Activated CD4-positive, alpha-beta memory T cell treated with anti-CD3 and anti-CD28 coated beads for 36 hours (primary cell): ENCODE measurements at regions of chr10 and their contacts with region 1.

Region 1: GRCh38 chr10:28532383-28533175 is at the start of gene WAC:
- DNase-seq: peak; percentile 98
- H3K4me3 Mint-ChIP-seq: peak within 1 kb of the TSS; percentile 98
- H3K27ac Mint-ChIP-seq: peak within 1 kb of the TSS; percentile 100
- H3K4me1 Mint-ChIP-seq: peaks cover 45% of the 10 kb centered on the region
- H3K27me3 Mint-ChIP-seq: no peaks in the 10 kb centered on the region
- total RNA-seq, gene WAC: 92.9 to 93.1 TPM

Region 2: GRCh38 chr10:27457966-27458365 is 1074.6 kb before region 1 on chr10:
- CTCF ChIA-PET with region 1: no interaction called
- POLR2A ChIA-PET with region 1: no interaction called
- intact Hi-C with region 1: no loop called
- DNase-seq: no peak
- H3K4me3 Mint-ChIP-seq: no peak overlapping the region
- H3K27ac Mint-ChIP-seq: no peak overlapping the region
- H3K4me1 Mint-ChIP-seq: peaks cover 6% of the 10 kb centered on the region
- H3K27me3 Mint-ChIP-seq: no peaks in the 10 kb centered on the region

Region 3: GRCh38 chr10:27504007-27504807 is 1028.4 kb before region 1 on chr10 and contains the start of gene RAB18:
- CTCF ChIA-PET with region 1: no interaction called
- POLR2A ChIA-PET with region 1: no interaction called
- intact Hi-C with region 1: loop called (anchors 1 kb)
- DNase-seq: peak; percentile 99
- H3K4me3 Mint-ChIP-seq: peak within 1 kb of the TSS; percentile 100
- H3K27ac Mint-ChIP-seq: peak within 1 kb of the TSS; percentile 96
- H3K4me1 Mint-ChIP-seq: peaks cover 51% of the 10 kb centered on the region
- H3K27me3 Mint-ChIP-seq: no peaks in the 10 kb centered on the region
- total RNA-seq, gene RAB18: 51.7 to 54.0 TPM

Region 4: DNA sequence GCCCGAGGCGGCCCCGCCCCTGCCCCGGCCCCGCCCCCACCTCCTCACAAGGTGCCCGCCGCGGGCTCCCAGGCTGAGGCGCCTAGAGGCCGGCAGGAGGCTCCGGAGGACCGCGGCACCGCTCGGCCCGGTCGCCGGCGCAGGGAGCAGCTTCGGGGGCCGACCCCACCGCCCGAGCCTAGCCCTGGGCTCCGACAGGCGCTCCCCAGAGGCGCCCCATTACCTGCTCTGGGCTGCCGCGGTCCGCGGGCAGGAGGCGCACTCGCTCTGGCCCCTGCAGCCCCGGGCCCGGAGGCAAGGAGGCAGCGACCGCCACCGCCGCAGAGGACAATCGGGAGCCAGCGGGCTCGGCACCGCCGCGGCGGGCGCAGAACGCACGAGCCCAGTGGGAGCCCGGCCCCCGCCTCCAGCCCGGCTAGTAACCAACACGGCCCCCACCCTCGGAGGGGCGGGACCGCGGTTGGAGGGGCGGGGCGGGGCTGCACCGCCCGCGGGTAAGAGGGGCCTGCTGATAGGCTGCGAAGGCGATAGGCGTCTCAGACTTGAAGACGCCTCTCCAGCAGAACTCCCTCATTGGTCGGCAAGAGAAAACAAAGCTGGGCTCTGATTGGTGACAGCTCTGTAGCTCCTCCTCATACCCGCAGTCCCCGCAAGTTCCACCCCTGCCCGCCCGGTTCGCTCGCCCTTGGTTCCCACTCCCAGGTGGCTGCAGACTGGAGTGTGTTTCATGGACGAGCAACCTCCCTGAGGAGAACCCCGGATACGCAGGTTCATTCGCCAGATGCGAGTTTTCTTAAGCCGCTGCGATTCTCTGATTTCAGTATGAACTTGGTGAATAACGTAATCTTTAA is 229.7 kb before region 1 on chr10 and contains the start of gene MPP7:
- CTCF ChIA-PET with region 1: no interaction called
- POLR2A ChIA-PET with region 1: interaction called, 3 read pairs
- intact Hi-C with region 1: loop called (anchors 2 kb)
- DNase-seq: peak; percentile 97
- H3K4me3 Mint-ChIP-seq: peak within 1 kb of the TSS; percentile 90
- H3K27ac Mint-ChIP-seq: peak within 1 kb of the TSS; percentile 71
- H3K4me1 Mint-ChIP-seq: peaks cover 46% of the 10 kb centered on the region
- H3K27me3 Mint-ChIP-seq: no peaks in the 10 kb centered on the region
- total RNA-seq, gene MPP7: 11.6 to 12.8 TPM

Region 5: GRCh38 chr10:28545967-28546644 is 13.5 kb after region 1 on chr10:
- CTCF ChIA-PET with region 1: interaction called, 4 read pairs
- POLR2A ChIA-PET with region 1: interaction called, 10 read pairs
- intact Hi-C with region 1: loop called (anchors 2 kb)
- DNase-seq: no peak
- H3K4me3 Mint-ChIP-seq: no peak overlapping the region
- H3K27ac Mint-ChIP-seq: peak overlapping the region; percentile 4
- H3K4me1 Mint-ChIP-seq: peaks cover 70% of the 10 kb centered on the region
- H3K27me3 Mint-ChIP-seq: no peaks in the 10 kb centered on the region

Region 6: GRCh38 chr10:28592930-28593329 is 60.4 kb after region 1 on chr10:
- CTCF ChIA-PET with region 1: no interaction called
- POLR2A ChIA-PET with region 1: no interaction called
- intact Hi-C with region 1: loop called (anchors 5 kb)
- DNase-seq: no peak
- H3K4me3 Mint-ChIP-seq: peak overlapping the region; percentile 23
- H3K27ac Mint-ChIP-seq: peak overlapping the region; percentile 71
- H3K4me1 Mint-ChIP-seq: peaks cover 58% of the 10 kb centered on the region
- H3K27me3 Mint-ChIP-seq: no peaks in the 10 kb centered on the region

Region 7: GRCh38 chr10:28839600-28840007 is 307.0 kb after region 1 on chr10:
- CTCF ChIA-PET with region 1: no interaction called
- POLR2A ChIA-PET with region 1: no interaction called
- intact Hi-C with region 1: no loop called
- DNase-seq: no peak
- H3K4me3 Mint-ChIP-seq: no peak overlapping the region
- H3K27ac Mint-ChIP-seq: no peak overlapping the region
- H3K4me1 Mint-ChIP-seq: no peaks in the 10 kb centered on the region
- H3K27me3 Mint-ChIP-seq: peaks cover 7% of the 10 kb centered on the region